Astrocyte of the cerebellum (primary cell): ENCODE measurements at regions of chr2 and their contacts with region 1.

Region 1: GRCh38 chr2:170486730-170487129 is 228.4 kb upstream of the SP5 start:
- DNase-seq: no peak
- H3K4me3 ChIP-seq: no peak overlapping the region
- CTCF ChIP-seq: no peak

Region 2: GRCh38 chr2:170454471-170455372 is 32.0 kb before region 1 on chr2:
- in situ Hi-C with region 1: loop called (anchors 5 kb)
- DNase-seq: no peak
- H3K4me3 ChIP-seq: no peak overlapping the region
- CTCF ChIP-seq: no peak